ENCODE measurements at regions of chr4 and their contacts with region 1.

Region 1: DNA sequence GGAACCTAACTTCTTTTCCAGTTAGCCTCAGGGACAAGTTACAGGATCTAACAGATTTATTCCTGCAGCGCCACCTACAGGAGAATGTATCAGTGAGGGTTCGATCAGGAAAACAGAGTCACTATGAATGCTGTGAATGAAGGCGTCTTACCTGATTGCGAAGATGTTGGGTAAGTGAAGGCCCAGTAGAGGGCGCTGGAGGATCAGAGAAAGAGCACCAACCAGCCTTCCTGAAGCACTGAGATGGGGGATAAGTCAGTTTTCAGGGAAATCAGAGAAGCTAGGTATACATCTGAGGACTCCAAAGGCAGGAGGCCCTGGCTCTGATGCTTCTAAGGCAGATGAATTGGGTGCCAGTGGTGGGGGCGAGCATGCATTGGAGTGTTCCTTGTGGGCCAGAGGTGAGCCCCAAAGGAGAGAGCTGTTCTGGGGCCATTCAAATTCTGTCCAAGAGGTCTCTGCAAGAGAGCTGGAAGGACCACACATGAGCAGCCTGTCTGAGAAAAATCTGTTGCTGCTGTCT is 169.9 kb upstream of the AADAT start:
- DNase-seq: peak; percentile 98
- H3K4me3 Mint-ChIP-seq: no peak overlapping the region
- H3K27ac Mint-ChIP-seq: no peak overlapping the region
- H3K4me1 Mint-ChIP-seq: no peaks in the 10 kb centered on the region
- H3K27me3 Mint-ChIP-seq: no peaks in the 10 kb centered on the region
- CTCF ChIP-seq: peak; percentile 95

Region 2: GRCh38 chr4:170145120-170145519 is 114.6 kb before region 1 on chr4:
- CTCF ChIA-PET with region 1: interaction called, 21 read pairs
- POLR2A ChIA-PET with region 1: no interaction called
- intact Hi-C with region 1: no loop called
- DNase-seq: no peak
- H3K4me3 Mint-ChIP-seq: no peak overlapping the region
- H3K27ac Mint-ChIP-seq: no peak overlapping the region
- H3K4me1 Mint-ChIP-seq: no peaks in the 10 kb centered on the region
- H3K27me3 Mint-ChIP-seq: no peaks in the 10 kb centered on the region
- CTCF ChIP-seq: no peak

Region 3: DNA sequence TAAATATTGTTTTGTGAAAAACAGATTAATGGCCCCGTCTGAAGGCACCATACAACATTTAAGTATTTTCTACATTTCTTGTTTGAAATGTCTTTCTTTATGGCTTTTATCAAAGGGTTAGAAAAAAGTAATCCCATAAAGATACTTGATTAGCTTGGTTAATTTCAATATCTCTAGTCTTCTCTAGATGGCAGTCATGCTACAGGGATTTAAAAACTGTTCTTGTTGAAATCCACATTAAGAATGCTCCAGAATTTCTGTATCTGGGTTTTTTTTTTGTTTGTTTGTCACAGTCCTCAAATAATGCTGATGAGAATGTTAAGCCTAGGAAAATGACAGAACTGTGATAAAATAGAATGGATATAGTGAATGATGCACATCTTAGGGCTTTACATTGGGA is 60.9 kb before region 1 on chr4:
- CTCF ChIA-PET with region 1: interaction called, 128 read pairs
- POLR2A ChIA-PET with region 1: interaction called, 5 read pairs
- intact Hi-C with region 1: loop called (anchors 1 kb)
- DNase-seq: peak; percentile 33
- H3K4me3 Mint-ChIP-seq: no peak overlapping the region
- H3K27ac Mint-ChIP-seq: no peak overlapping the region
- H3K4me1 Mint-ChIP-seq: peaks cover 6% of the 10 kb centered on the region
- H3K27me3 Mint-ChIP-seq: no peaks in the 10 kb centered on the region
- CTCF ChIP-seq: peak; percentile 30

Region 4: GRCh38 chr4:170248576-170248975 is 11.1 kb before region 1 on chr4:
- CTCF ChIA-PET with region 1: interaction called, 97 read pairs
- POLR2A ChIA-PET with region 1: no interaction called
- intact Hi-C with region 1: no loop called
- DNase-seq: no peak
- H3K4me3 Mint-ChIP-seq: no peak overlapping the region
- H3K27ac Mint-ChIP-seq: no peak overlapping the region
- H3K4me1 Mint-ChIP-seq: peaks cover 12% of the 10 kb centered on the region
- H3K27me3 Mint-ChIP-seq: no peaks in the 10 kb centered on the region
- CTCF ChIP-seq: no peak

Region 5: DNA sequence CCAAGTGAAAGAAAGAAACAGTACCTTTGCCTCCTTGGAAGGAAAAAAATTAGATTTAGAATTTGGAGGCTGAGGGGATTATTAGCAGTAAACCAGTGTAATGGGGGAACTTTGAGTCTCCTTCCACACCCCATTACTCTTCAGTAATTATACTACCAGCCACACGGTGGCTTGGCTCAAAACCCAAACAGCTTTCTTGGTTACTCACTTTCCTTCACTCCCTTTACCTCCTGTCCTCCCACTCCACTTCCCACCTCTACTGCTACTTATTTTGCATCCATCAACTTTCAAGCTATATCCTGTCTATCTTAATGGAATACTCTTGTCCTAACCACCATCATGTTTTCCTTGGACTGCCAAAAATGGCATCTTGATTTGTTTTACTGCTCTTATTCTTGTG is 140.7 kb after region 1 on chr4:
- CTCF ChIA-PET with region 1: no interaction called
- POLR2A ChIA-PET with region 1: no interaction called
- intact Hi-C with region 1: no loop called
- DNase-seq: peak; percentile 9
- H3K4me3 Mint-ChIP-seq: no peak overlapping the region
- H3K27ac Mint-ChIP-seq: no peak overlapping the region
- H3K4me1 Mint-ChIP-seq: peaks cover 10% of the 10 kb centered on the region
- H3K27me3 Mint-ChIP-seq: no peaks in the 10 kb centered on the region
- CTCF ChIP-seq: no peak

Region 6: GRCh38 chr4:170589597-170590191 is 330.0 kb after region 1 on chr4:
- CTCF ChIA-PET with region 1: interaction called, 10 read pairs
- POLR2A ChIA-PET with region 1: interaction called, 3 read pairs
- intact Hi-C with region 1: loop called (anchors 2 kb)
- DNase-seq: peak; percentile 61
- H3K4me3 Mint-ChIP-seq: no peak overlapping the region
- H3K27ac Mint-ChIP-seq: no peak overlapping the region
- H3K4me1 Mint-ChIP-seq: no peaks in the 10 kb centered on the region
- H3K27me3 Mint-ChIP-seq: no peaks in the 10 kb centered on the region
- CTCF ChIP-seq: peak; percentile 34

Region 7: GRCh38 chr4:172202480-172203076 is 1942.9 kb after region 1 on chr4:
- CTCF ChIA-PET with region 1: interaction called, 19 read pairs
- POLR2A ChIA-PET with region 1: no interaction called
- intact Hi-C with region 1: loop called (anchors 2 kb)
- DNase-seq: peak; percentile 38
- H3K4me3 Mint-ChIP-seq: no peak overlapping the region
- H3K27ac Mint-ChIP-seq: no peak overlapping the region
- H3K4me1 Mint-ChIP-seq: no peaks in the 10 kb centered on the region
- H3K27me3 Mint-ChIP-seq: peaks cover 50% of the 10 kb centered on the region
- CTCF ChIP-seq: peak; percentile 74

Measured in MCF 10A (cell line).